ENCODE measurements at regions of chr11 and their contacts with region 1.

Region 1: DNA sequence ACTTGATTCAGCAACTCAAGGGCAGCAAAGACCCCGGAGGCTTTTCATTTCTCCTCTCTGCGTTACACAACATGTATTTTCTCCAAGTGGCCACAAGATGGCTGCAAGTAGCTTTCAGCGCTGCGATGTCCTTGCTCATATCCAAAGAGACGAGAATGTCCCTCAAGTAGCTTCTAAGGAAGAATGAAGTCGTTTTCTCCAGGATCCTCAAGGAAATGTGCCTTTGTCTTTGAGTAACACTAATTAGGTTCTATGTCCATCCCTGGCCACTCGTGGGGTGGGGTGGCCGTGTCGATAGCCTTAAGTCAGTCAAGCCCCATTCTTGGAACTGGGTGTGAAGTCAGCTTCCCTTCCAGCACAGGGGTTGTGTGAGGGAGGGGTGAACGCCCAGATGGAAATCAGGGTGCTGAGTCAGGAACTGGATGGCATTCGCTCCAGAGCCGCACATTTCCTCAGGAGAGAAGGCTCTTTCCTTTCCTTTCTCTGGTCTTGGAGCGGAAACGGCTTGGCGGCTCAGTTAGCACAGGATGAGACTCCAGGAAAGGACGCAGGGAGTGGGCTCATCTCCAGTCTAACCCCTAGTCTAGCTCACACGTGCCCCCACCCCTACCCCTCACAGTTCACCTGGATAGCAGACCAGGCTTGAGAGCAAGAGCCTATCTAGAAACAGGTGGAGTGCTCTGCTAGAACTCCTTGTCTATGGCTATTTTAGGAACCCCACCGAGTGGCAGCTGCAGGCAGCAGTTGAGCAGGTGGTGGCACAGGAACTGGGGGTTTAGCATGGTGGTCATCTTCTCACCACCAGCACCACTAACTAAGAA is 44.3 kb downstream of the NNMT start:
- DNase-seq: no peak
- ATAC-seq: peak; percentile 77

Region 2: DNA sequence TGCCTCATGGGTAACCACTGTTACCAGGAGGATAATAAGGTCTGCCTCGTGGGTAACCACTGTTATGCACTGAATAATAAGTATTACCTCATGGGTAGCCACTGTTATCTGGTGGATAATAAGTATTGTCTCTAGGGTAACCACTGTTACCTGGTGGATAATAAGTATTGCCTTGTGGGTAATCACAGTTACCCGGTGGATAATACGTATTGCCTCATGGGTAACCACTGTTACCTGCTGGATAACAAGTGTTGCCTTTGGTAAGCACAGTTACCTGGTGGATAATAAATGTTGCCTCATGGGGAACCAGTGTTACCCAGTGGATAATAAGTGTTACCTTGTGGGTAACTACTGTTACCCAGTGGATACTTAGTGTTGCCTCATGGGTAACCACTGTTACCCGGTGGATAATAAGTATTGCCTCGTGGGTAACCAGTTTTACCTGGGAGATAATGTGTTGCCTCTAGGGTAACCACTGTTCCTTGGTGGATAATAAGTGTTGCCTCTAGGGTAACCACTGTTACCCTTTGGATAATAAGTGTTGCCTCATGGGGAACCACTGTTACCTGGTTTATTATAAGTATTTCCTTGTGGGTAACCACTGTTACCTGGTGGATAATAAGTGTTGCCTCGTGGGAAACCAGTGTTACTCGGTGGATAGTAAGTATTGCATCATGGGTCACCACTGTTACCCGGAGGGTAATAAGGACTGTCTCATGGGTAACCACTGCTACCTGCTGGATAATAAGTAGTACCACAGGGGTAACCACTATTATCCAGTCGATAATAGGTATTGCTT is 265.7 kb after region 1 on chr11:
- intact Hi-C with region 1: loop called (anchors 10 kb)
- DNase-seq: no peak
- ATAC-seq: no peak

Region 3: GRCh38 chr11:114762408-114762807 is 421.9 kb after region 1 on chr11:
- intact Hi-C with region 1: loop called (anchors 2 kb)
- DNase-seq: no peak
- ATAC-seq: peak; percentile 81

Region 4: GRCh38 chr11:114796954-114797721 is 456.6 kb after region 1 on chr11:
- intact Hi-C with region 1: no loop called
- DNase-seq: no peak
- ATAC-seq: peak; percentile 76

Measured in Right ventricle myocardium inferior (tissue), 1 donor.